Right lobe of liver (tissue), 6 donors: ENCODE measurements at regions of chr17 and their contacts with region 1.

Region 1: GRCh38 chr17:75749545-75750389 is 15.2 kb downstream of the GALK1 start:
- DNase-seq: peak; percentile 86 to 88 (median 87)
- ATAC-seq: peak; percentile 57 to 67 (median 59)
- H3K4me3 ChIP-seq: no peak overlapping the region
- H3K27ac ChIP-seq: no peak overlapping the region
- H3K4me1 ChIP-seq: peaks cover 0 to 17% (median 7%) of the 10 kb centered on the region in 4 donors
- H3K27me3 ChIP-seq: no peaks in the 10 kb centered on the region
- CTCF ChIP-seq: peak; percentile 90 to 97 (median 94)
- POLR2A ChIP-seq: no peak

Region 2: GRCh38 chr17:75679706-75680442 is 69.9 kb before region 1 on chr17:
- intact Hi-C with region 1: loop called (anchors 5 kb)
- DNase-seq: peak in 2 of 3 donors; percentile 48 to 56
- ATAC-seq: peak; percentile 37 to 87 (median 64)
- H3K4me3 ChIP-seq: no peak overlapping the region
- H3K27ac ChIP-seq: peak overlapping the region in 1 of 3 donors; percentile 14
- H3K4me1 ChIP-seq: peaks cover 0 to 8% (median 0%) of the 10 kb centered on the region in 4 donors
- H3K27me3 ChIP-seq: no peaks in the 10 kb centered on the region
- CTCF ChIP-seq: peak in 3 of 4 donors; percentile 7 to 36 (median 20)
- POLR2A ChIP-seq: no peak

Region 3: GRCh38 chr17:75827252-75828115 is 77.7 kb after region 1 on chr17:
- intact Hi-C with region 1: loop called in 1 of 2 experiments (anchors 10 kb)
- DNase-seq: peak in 1 of 3 donors; percentile 46
- ATAC-seq: peak; percentile 60 to 70 (median 61)
- H3K4me3 ChIP-seq: peak overlapping the region in 1 of 3 donors; percentile 13
- H3K27ac ChIP-seq: peak overlapping the region in 2 of 3 donors; percentile 31 to 46
- H3K4me1 ChIP-seq: peaks cover 0 to 17% (median 0%) of the 10 kb centered on the region in 4 donors
- H3K27me3 ChIP-seq: no peaks in the 10 kb centered on the region
- CTCF ChIP-seq: peak; percentile 46 to 63 (median 56)
- POLR2A ChIP-seq: no peak

Region 4: DNA sequence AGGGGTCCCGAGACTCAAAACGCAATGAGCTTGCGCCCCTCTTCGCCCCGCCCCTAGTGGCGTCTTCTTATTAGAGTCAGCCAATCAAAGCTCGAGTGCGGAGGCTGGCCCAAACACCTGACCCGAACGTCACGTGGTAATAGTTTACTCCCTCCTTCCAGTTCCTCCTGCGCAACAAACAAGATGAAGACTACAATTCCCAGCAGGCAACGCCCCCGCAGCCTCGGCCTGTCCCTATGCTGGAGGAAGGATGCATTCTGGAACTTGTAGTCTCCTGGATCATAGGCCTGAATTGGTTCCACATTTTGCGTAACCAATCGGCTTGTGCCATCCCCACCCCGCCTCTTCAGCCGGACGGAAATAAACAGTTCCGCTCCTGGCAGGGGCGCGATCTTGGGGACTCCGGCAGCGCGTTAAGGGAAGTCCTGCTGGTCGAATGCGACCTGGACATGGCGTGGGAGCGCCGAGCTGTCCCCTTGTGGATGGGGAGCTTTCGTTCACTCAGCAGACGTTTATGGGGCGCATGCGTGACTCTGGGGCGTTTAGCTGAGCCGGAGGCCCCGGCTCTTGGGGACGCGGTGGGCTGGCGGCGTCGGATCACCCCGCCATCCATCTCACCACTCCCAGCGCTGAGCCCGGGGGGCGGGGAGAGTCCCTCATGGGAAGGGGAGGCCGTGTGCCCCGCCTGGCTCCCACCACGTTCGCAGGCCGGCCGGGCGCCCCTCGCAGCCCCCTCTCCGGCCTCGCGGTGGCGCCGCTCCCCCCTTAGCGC is 105.7 kb after region 1 on chr17 and contains the start of gene WBP2:
- intact Hi-C with region 1: no loop called
- DNase-seq: peak; percentile 97 to 98 (median 97)
- ATAC-seq: peak; percentile 82 to 91 (median 89)
- H3K4me3 ChIP-seq: peak within 1 kb of the TSS; percentile 77 to 98 (median 81)
- H3K27ac ChIP-seq: peak within 1 kb of the TSS; percentile 97 to 100 (median 99)
- H3K4me1 ChIP-seq: peaks cover 0 to 44% (median 23%) of the 10 kb centered on the region in 4 donors
- H3K27me3 ChIP-seq: no peaks in the 10 kb centered on the region
- CTCF ChIP-seq: peak; percentile 33 to 41 (median 39)
- POLR2A ChIP-seq: peak; percentile 96
- total RNA-seq, gene WBP2: 57.5 to 99.2 (median 68.7) TPM